ENCODE measurements at regions of chr1 and their contacts with region 1.

Region 1: DNA sequence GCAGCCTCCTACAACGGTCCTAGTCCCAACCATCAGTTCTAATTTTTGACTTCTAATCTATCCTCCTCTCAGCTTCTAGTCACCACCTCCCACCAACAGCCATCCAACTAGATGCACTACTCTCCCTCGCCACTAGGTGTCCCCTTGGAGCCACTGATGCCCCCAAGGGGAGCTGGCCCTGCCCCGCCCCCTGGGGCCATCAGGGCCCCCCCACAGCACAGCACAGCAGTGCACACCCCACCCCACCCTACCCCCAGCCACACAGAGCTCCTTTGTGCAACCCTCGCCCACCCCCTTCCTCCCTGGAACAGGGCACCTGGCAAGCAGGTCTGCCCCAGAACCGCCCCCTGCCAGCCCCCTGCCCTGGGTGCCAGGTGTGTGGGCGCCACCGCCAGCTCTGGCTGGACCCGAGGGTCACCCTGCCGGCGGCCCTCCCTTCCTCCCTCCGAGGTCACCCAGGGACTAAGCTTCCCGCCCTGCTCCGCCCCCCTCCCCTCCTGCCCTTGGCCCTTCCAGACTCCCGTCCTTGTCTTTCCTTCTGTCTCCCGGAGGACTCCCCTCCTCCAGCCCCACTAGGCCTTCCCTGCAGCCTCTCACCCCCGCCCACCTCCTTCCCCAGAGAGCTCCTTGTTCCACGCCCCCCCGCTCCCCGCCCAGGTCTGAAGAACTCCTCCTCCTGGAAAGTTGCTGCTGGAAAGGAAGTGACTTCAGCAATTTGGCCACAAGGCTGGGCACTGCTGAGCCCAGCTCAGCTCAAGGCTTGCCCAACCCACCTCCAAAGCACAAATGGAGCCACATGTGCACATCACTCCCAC is 47.0 kb downstream of the AHDC1 start:
- DNase-seq: peak; percentile 51 to 79 (median 65)
- ATAC-seq: peak; percentile 87
- H3K4me3 ChIP-seq: no peak overlapping the region
- H3K4me3 Mint-ChIP-seq: peak overlapping the region; percentile 14 to 88 (median 67)
- H3K27ac ChIP-seq: no peak overlapping the region
- H3K27ac Mint-ChIP-seq: peak overlapping the region; percentile 32 to 98 (median 81)
- H3K4me1 ChIP-seq: peaks cover 8 to 16% of the 10 kb centered on the region in 2 donors
- H3K4me1 Mint-ChIP-seq: peaks cover 23 to 56% (median 46%) of the 10 kb centered on the region in 7 donors
- H3K27me3 ChIP-seq: no peaks in the 10 kb centered on the region
- H3K27me3 Mint-ChIP-seq: no peaks in the 10 kb centered on the region

Region 2: GRCh38 chr1:27166351-27166802 is 390.6 kb before region 1 on chr1:
- CTCF ChIA-PET with region 1: no interaction called
- POLR2A ChIA-PET with region 1: no interaction called
- intact Hi-C with region 1: no loop called
- DNase-seq: no peak
- ATAC-seq: no peak
- H3K4me3 ChIP-seq: no peak overlapping the region
- H3K4me3 Mint-ChIP-seq: no peak overlapping the region
- H3K27ac ChIP-seq: no peak overlapping the region
- H3K27ac Mint-ChIP-seq: no peak overlapping the region
- H3K4me1 ChIP-seq: peaks cover 0 to 6% of the 10 kb centered on the region in 2 donors
- H3K4me1 Mint-ChIP-seq: peaks cover 8 to 10% (median 10%) of the 10 kb centered on the region in 7 donors
- H3K27me3 ChIP-seq: no peaks in the 10 kb centered on the region
- H3K27me3 Mint-ChIP-seq: no peaks in the 10 kb centered on the region

Region 3: DNA sequence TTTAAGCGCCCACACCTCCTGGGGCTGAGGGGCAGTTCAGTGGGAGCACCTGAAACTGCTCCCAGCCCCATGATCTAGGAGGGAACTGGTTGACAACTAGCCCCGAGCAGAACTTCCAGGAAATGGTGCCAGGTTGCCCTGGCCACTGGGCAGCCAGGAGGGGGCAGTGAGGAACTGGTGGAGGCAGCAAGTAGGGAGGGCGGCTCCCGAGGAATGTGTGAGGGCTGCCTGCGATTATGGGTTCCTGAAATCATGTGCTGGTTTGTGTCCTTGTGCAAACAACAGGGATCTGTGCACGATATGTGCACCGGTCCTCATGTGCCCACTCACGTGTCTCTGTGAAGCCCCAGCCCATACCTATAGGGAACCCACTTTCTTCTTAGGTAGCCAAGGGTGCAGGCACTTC is 154.6 kb before region 1 on chr1:
- CTCF ChIA-PET with region 1: interaction called, 4 read pairs
- POLR2A ChIA-PET with region 1: no interaction called
- intact Hi-C with region 1: loop called in 1 of 2 experiments (anchors 1 kb)
- DNase-seq: no peak
- ATAC-seq: peak; percentile 44
- H3K4me3 ChIP-seq: no peak overlapping the region
- H3K4me3 Mint-ChIP-seq: no peak overlapping the region
- H3K27ac ChIP-seq: peak overlapping the region; percentile 48
- H3K27ac Mint-ChIP-seq: peak overlapping the region in 7 of 9 donors; percentile 36 to 95 (median 87)
- H3K4me1 ChIP-seq: peaks cover 0 to 17% of the 10 kb centered on the region in 2 donors
- H3K4me1 Mint-ChIP-seq: peaks cover 10 to 40% (median 33%) of the 10 kb centered on the region in 7 donors
- H3K27me3 ChIP-seq: no peaks in the 10 kb centered on the region
- H3K27me3 Mint-ChIP-seq: no peaks in the 10 kb centered on the region

Region 4: DNA sequence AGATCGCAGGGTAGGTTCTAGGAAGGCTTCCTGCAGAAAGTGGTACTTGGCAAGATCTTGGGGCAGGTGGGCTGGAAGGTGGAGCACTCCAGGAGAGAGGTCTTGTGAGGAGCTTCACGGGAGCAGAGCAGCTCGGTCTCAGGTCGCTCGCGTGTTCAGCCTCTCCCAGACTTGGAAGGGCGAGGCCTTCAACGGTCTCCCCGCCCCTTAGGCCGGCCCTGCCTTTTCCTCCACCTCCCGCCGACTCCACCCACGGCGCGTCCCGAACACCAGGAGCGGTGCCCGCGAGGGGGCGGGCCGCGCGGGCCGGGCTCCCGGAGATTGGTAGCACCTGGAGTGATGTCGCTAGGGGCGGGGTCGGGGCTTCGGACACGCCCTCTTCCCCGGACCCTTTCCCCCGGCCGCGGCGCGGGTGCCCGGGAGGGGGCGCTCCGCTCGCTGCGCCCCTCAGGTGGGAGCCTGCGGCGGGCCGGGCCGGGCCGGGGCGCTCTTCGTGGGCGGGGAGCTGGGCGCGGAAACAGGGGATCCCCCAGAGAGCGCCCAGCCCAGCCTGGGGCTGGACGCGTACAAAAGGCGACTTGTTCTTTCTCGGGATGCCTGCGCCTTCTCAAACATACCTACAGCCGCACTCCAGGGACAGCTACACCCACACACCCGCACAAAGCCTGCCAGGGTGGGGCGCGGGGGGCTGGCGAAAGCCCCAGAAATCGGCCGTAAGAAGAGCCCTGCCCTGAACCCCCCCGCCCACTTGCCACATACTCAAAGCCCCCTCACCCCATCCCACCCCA is 11.5 kb after region 1 on chr1:
- CTCF ChIA-PET with region 1: interaction called, 33 read pairs
- POLR2A ChIA-PET with region 1: interaction called, 3 read pairs
- intact Hi-C with region 1: loop called (anchors 1 kb)
- DNase-seq: peak; percentile 87 to 96 (median 91)
- ATAC-seq: peak; percentile 96
- H3K4me3 ChIP-seq: peak overlapping the region; percentile 51
- H3K4me3 Mint-ChIP-seq: peak overlapping the region; percentile 55 to 88 (median 78)
- H3K27ac ChIP-seq: peak overlapping the region; percentile 68
- H3K27ac Mint-ChIP-seq: peak overlapping the region; percentile 64 to 93 (median 83)
- H3K4me1 ChIP-seq: peaks cover 7 to 19% of the 10 kb centered on the region in 2 donors
- H3K4me1 Mint-ChIP-seq: peaks cover 15 to 57% (median 51%) of the 10 kb centered on the region in 7 donors
- H3K27me3 ChIP-seq: no peaks in the 10 kb centered on the region
- H3K27me3 Mint-ChIP-seq: no peaks in the 10 kb centered on the region